CD4-positive, alpha-beta memory T cell (primary cell): ENCODE measurements at regions of chr12 and their contacts with region 1.

Region 1: DNA sequence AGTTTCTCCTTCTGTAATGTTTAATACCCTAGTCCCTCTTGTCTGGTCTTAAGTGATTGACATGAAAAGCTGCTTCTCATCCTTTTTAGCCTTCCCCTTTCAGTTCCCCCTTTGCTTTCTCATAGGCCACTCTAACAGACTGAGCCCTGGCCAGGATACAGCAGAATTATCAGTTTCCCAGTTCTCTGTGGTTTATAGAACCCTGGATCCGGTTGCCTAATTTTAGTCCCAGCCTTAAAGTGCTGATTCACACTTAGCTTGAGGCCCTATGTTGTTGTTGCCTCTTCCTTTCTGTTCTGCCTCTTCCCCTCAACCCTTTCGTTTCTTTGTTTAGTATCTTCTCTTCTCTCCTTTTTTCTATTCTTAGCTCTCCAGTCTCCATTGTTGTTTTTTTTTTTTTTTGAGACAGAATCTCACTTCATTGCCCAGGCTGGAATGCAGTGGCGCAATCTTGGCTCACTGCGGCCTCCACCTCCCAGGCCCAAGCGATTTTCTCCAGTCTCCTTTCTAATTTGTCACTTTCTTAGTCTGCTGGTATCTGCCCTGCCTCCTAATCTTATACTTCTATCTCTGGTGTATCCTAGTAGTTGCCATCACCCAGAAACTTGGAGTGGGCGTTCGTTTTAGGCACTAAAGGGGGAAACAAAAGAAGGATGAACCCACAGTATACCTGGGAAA is 2.9 kb upstream of the BIN2 start:
- DNase-seq: no peak
- H3K4me3 ChIP-seq: no peak overlapping the region
- H3K4me3 Mint-ChIP-seq: peak overlapping the region in 7 of 8 donors; percentile 40 to 74 (median 64)
- H3K27ac ChIP-seq: peak overlapping the region; percentile 27
- H3K27ac Mint-ChIP-seq: peak overlapping the region; percentile 77 to 98 (median 94)
- H3K4me1 ChIP-seq: peaks cover 65% of the 10 kb centered on the region
- H3K4me1 Mint-ChIP-seq: peaks cover 51 to 91% (median 71%) of the 10 kb centered on the region in 4 donors
- H3K27me3 ChIP-seq: no peaks in the 10 kb centered on the region
- H3K27me3 Mint-ChIP-seq: no peaks in the 10 kb centered on the region

Region 2: DNA sequence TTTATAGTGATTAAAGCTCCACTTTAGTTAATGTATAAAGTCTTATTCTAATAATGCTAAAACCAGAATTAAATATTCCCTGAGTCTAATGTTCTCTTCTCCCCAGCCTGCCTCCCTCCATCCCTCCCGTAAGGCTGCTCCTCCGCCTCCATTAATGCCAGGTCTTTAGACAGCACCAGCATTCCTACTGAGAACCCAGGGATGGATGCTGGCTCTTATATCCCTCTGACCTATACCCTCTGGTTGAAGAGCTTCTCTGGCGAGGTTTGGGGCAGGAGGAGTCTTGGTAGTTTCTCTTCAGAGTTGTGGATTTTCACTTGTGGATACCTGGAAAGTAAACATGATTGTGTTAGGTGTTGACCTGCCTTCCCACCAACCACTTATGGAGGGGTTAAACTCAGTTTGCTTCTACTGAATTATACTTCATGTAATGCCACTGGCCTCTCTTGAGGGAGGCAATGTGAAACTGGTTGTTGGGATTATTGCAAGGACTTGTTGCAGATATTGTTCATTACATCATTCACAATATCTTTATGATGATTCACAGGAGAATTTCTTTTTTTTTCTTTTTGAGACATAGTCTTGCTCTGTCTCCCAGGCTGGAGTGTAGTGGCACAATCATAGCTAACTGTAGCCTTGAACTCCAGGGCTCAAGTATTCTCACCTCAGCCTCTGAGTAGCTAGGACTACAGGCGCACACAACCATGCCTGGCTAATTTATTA is 45.5 kb before region 1 on chr12:
- CTCF ChIA-PET with region 1: no interaction called
- POLR2A ChIA-PET with region 1: interaction called, 3 read pairs
- intact Hi-C with region 1: loop called (anchors 5 kb)
- DNase-seq: no peak
- H3K4me3 ChIP-seq: no peak overlapping the region
- H3K4me3 Mint-ChIP-seq: no peak overlapping the region
- H3K27ac ChIP-seq: no peak overlapping the region
- H3K27ac Mint-ChIP-seq: peak overlapping the region in 5 of 7 donors; percentile 15 to 68 (median 57)
- H3K4me1 ChIP-seq: no peaks in the 10 kb centered on the region
- H3K4me1 Mint-ChIP-seq: peaks cover 0 to 6% (median under 1%) of the 10 kb centered on the region in 4 donors
- H3K27me3 ChIP-seq: no peaks in the 10 kb centered on the region
- H3K27me3 Mint-ChIP-seq: no peaks in the 10 kb centered on the region

Region 3: DNA sequence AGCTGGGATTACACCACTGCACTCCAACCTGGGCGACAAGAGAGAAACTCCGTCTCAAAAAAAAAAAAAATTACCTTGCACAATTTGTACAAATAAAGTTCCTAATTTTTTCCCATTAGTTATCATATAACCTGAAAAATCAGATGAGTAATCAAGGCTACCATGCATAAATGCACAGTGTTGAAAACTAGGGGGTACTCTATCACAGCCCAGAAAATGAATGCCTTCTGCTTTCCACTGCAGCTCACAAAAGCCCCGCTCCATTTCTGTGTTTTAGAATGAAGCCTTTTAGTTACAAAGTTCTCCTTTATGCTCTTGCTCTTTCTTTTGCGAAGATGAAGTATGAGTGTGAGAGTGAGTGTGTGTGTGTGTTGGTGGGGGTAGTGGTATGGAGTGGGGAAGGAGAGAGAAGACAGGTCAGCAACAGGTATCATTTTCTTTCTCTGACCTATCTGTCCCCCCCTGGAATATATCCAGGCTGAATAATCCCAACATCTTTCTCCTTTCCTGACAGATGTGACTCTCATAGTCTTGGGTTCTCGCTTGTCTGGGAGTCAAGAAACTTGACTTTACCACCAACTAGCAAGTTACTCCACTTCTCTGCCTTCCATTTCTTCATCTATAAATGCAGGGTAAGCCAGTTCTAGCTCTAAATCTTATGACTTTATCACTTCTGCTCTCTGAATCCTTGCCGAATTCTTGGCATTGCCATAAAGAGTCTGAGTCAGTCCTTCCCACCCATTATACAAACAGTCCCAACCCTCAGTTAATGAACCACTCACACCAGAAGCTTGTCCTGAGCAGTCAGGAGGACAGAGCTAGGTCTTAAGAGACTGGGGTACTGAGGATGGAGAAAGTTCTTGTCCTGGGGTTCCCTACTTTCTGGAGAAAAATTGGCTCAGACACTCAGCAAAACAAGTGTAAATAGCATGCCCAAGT is 19.0 kb before region 1 on chr12:
- CTCF ChIA-PET with region 1: interaction called, 5 read pairs
- POLR2A ChIA-PET with region 1: interaction called, 85 read pairs
- intact Hi-C with region 1: no loop called
- DNase-seq: no peak
- H3K4me3 ChIP-seq: no peak overlapping the region
- H3K4me3 Mint-ChIP-seq: peak overlapping the region in 5 of 8 donors; percentile 12 to 70 (median 27)
- H3K27ac ChIP-seq: no peak overlapping the region
- H3K27ac Mint-ChIP-seq: peak overlapping the region; percentile 60 to 92 (median 84)
- H3K4me1 ChIP-seq: peaks cover 56% of the 10 kb centered on the region
- H3K4me1 Mint-ChIP-seq: peaks cover 44 to 79% (median 60%) of the 10 kb centered on the region in 4 donors
- H3K27me3 ChIP-seq: no peaks in the 10 kb centered on the region
- H3K27me3 Mint-ChIP-seq: no peaks in the 10 kb centered on the region

Region 4: DNA sequence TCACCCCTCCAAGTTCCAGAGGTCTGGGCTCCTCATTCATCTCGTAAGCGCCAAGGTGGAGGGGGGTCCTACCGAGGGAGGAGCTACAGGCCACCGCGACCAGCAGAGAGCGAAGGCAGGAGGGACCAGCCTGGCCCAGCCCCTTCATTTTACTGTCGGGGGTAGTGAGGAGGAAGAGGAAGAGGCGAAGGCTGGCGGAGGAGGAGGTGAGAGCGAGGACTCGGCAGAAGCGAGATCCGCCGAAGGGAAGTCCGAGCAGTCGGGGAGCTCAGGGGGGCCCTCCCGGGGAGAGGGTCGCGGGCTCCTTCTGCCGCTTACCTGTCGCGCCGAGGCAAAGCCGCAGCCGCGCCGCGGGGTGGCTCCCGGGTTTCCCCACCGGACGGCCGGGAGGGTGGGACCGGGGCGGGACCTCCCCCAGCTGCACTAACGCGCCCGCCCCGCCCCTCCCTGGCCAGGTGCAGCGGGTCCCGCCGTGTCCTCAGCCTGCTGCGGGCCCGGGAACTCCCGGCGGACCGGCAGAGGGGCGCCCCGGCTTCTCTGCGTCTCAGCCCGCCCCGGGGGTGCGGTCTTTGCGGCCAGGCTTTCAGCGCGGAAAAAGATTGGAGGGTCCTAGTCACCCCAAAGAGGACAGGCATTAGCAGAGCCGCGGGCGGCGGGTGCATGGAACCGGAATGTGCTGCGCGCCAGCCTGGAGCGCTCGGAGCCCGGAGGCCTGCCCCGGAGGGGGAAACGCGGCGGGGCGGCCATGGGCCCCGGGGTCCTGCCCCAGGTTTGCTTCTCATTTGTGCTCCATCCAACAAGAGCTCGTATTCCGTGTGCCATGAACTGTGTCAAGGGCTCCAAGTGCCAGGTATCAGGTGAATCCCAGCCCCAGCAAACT is 64.6 kb after region 1 on chr12 and contains the start of gene GALNT6:
- CTCF ChIA-PET with region 1: no interaction called
- POLR2A ChIA-PET with region 1: interaction called, 12 read pairs
- intact Hi-C with region 1: no loop called
- DNase-seq: peak; percentile 60 to 79 (median 65)
- H3K4me3 ChIP-seq: peak within 1 kb of the TSS; percentile 25 to 68
- H3K4me3 Mint-ChIP-seq: peak within 1 kb of the TSS; percentile 86 to 97 (median 90)
- H3K27ac ChIP-seq: peak within 1 kb of the TSS; percentile 55
- H3K27ac Mint-ChIP-seq: peak within 1 kb of the TSS; percentile 74 to 97 (median 91)
- H3K4me1 ChIP-seq: peaks cover 74% of the 10 kb centered on the region
- H3K4me1 Mint-ChIP-seq: peaks cover 58 to 80% (median 69%) of the 10 kb centered on the region in 4 donors
- H3K27me3 ChIP-seq: no peaks in the 10 kb centered on the region
- H3K27me3 Mint-ChIP-seq: no peaks in the 10 kb centered on the region
- total RNA-seq, gene GALNT6: 1.7 to 4.9 TPM